ENCODE measurements at regions of chr3 and their contacts with region 1.

Region 1: DNA sequence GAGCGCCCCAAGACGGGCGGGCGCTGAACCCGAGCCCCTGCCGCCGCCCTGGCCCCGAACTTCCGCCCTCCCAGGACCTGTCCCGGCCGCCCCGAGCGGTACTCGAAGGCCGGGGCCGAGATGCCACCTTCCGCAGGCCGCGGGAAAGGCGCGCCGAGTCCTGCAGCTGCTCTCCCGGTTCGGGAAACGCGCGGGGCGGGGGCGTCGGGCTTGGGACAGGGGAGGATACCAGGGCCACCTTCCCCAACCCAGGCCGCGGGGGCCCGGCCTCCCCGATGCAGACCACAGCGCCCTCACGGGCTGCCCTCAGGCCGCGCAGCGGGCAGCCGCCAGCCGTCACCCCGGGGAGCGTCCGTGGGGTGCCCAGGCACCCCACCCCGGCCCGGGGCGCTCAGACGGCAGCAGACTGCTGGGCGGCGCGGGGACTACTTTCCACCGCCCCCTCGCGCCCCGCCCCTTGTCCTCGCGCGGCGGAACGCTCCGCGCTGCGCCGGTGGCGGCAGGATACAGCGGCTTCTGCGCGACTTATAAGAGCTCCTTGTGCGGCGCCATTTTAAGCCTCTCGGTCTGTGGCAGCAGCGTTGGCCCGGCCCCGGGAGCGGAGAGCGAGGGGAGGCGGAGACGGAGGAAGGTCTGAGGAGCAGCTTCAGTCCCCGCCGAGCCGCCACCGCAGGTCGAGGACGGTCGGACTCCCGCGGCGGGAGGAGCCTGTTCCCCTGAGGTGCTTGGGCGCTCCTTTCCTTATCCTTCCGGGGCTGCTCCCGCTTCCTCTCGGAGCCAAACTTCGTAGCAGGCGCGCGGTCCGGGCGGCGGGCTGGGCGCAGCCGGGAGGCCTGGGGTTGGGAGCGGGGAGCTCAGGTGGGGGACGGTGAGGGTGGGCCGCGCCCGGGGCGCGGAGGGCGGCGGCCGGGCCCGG is at the start of gene CTNNB1:
- DNase-seq: peak; percentile 91
- ATAC-seq: peak; percentile 69
- H3K4me3 Mint-ChIP-seq: peak within 1 kb of the TSS; percentile 85
- H3K27ac Mint-ChIP-seq: peak within 1 kb of the TSS; percentile 91
- H3K4me1 Mint-ChIP-seq: peaks cover 38% of the 10 kb centered on the region
- H3K27me3 Mint-ChIP-seq: no peaks in the 10 kb centered on the region
- CTCF ChIP-seq: no peak
- total RNA-seq, gene CTNNB1: 387 to 436 TPM (median 432 TPM) in 3 replicates

Region 2: DNA sequence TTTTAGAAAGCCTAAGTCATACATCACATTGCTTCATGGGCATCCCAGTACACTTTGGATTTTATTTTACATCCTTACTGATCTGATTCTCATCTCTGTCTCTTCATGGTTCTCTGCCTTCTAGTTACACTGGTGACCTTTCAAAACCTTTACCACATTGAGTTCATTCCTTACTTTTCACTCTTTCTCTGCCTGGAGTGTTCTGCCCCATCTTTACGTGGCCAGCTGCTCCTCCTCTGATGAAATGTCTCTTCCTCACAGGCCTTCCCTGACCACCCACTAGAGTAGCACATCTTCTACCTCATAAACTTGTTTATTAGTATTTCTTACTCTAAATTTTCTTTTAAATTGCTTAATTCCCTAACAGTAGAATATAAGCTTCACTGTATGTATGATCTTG is 17.8 kb after region 1 on chr3:
- CTCF ChIA-PET with region 1: no interaction called
- POLR2A ChIA-PET with region 1: interaction called, 11 read pairs
- DNase-seq: no peak
- ATAC-seq: no peak
- H3K4me3 Mint-ChIP-seq: no peak overlapping the region
- H3K27ac Mint-ChIP-seq: peak overlapping the region; percentile 27
- H3K4me1 Mint-ChIP-seq: peaks cover 81% of the 10 kb centered on the region
- H3K27me3 Mint-ChIP-seq: no peaks in the 10 kb centered on the region
- CTCF ChIP-seq: no peak